Caki2 (cell line): ENCODE measurements at regions of chr10 and their contacts with region 1.

Region 1: DNA sequence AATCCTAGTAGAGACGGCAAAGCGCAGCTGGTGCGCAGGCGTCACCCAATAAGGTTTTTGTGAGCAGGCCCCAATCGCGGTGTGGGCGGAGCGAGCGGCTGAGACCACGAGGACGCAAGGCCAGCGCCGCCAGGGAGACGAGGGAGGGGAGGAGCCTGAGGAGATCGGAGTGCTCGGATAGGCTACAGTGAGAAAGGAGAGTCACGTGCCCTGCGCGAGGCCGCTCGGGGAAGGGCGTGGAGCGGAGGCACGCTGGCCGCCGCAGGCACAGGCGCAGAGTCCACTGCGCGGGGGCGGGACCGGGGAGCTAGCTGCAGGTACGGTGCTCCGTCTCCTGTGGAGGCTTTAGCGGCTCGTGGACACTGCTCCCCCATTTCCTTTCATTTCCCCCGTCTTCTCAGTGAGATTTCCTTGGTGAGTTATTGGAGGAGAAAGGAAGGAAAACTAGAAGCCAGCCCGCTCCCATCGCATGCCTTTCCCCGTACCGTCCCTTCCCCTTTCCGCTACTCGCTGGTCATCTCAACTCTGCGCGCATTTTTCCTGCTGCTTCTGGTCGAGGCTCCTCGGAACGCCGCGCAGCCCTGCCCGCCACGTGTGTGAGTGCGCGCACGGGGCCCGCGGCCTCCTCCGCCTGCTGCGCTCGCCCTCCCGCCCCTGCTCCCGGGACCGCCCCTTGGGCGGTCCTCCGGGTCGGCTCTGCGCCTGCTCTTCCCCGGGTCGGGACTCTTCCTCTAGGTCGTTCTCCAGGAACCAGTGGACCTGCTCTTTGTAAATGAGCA is at the start of gene THNSL1:
- DNase-seq: peak; percentile 100
- total RNA-seq, gene THNSL1: 3.3 and 12.7 TPM in 2 replicates

Region 2: DNA sequence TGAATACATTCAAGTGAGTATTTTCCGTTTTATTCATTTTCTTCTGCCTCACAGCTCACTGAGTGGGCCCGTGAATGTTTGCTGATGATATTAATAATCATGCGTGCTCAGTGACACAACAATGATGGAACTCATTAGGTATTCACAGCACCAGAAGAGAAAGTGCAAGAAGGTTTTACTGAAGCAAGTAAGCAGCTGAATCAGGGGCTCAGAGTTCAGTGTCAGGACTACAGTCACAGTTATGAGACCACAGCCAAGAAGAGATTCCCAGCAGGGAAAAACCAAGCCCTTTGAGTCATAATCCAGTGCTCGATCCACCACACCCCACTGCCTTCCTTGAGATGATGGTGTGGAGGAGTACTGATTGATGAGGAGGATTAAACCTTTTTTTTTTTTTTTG is 560.2 kb before region 1 on chr10:
- in situ Hi-C with region 1: no loop called
- DNase-seq: peak; percentile 50

Region 3: GRCh38 chr10:25068152-25069058 is 51.8 kb after region 1 on chr10:
- in situ Hi-C with region 1: loop called (anchors 5 kb)
- DNase-seq: peak; percentile 73

Region 4: DNA sequence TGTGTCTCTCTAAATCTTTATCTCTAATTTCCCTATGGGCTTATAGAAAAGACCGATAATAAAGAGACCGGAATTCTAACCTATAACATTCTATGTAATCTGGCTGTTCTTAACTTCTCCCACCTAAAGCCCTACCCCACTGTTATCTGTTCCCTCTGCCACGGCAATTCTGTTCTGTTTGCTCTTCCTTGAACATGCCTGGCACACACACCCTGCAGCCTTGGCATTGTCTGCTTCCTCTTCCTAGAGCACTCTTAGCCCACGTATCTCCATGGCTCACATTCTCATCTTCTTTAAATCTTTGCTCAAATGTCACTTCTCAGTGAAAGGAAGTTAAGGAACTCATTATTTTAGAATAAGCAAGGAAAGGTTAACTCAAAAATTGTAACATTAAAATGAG is 467.4 kb after region 1 on chr10:
- in situ Hi-C with region 1: no loop called
- DNase-seq: no peak